Breast epithelium (tissue), 4 donors: ENCODE measurements at regions of chr2 and their contacts with region 1.

Region 1: GRCh38 chr2:166404831-166405568 is 29.3 kb upstream of the SCN9A start:
- DNase-seq: no peak
- H3K4me3 ChIP-seq: no peak overlapping the region
- H3K27ac ChIP-seq: no peak overlapping the region
- H3K4me1 ChIP-seq: no peaks in the 10 kb centered on the region
- H3K27me3 ChIP-seq: no peaks in the 10 kb centered on the region
- CTCF ChIP-seq: no peak
- POLR2A ChIP-seq: no peak

Region 2: GRCh38 chr2:166081131-166081632 is 323.8 kb before region 1 on chr2:
- intact Hi-C with region 1: loop called (anchors 5 kb)
- DNase-seq: no peak
- H3K4me3 ChIP-seq: no peak overlapping the region
- H3K27ac ChIP-seq: no peak overlapping the region
- H3K4me1 ChIP-seq: no peaks in the 10 kb centered on the region
- H3K27me3 ChIP-seq: no peaks in the 10 kb centered on the region
- CTCF ChIP-seq: no peak
- POLR2A ChIP-seq: no peak

Region 3: GRCh38 chr2:167388497-167388896 is 983.5 kb after region 1 on chr2:
- intact Hi-C with region 1: no loop called
- DNase-seq: no peak
- H3K4me3 ChIP-seq: no peak overlapping the region
- H3K27ac ChIP-seq: no peak overlapping the region
- H3K4me1 ChIP-seq: no peaks in the 10 kb centered on the region
- H3K27me3 ChIP-seq: no peaks in the 10 kb centered on the region
- CTCF ChIP-seq: no peak
- POLR2A ChIP-seq: no peak